OCI-LY7 (cell line): ENCODE measurements at regions of chr4 and their contacts with region 1.

Region 1: DNA sequence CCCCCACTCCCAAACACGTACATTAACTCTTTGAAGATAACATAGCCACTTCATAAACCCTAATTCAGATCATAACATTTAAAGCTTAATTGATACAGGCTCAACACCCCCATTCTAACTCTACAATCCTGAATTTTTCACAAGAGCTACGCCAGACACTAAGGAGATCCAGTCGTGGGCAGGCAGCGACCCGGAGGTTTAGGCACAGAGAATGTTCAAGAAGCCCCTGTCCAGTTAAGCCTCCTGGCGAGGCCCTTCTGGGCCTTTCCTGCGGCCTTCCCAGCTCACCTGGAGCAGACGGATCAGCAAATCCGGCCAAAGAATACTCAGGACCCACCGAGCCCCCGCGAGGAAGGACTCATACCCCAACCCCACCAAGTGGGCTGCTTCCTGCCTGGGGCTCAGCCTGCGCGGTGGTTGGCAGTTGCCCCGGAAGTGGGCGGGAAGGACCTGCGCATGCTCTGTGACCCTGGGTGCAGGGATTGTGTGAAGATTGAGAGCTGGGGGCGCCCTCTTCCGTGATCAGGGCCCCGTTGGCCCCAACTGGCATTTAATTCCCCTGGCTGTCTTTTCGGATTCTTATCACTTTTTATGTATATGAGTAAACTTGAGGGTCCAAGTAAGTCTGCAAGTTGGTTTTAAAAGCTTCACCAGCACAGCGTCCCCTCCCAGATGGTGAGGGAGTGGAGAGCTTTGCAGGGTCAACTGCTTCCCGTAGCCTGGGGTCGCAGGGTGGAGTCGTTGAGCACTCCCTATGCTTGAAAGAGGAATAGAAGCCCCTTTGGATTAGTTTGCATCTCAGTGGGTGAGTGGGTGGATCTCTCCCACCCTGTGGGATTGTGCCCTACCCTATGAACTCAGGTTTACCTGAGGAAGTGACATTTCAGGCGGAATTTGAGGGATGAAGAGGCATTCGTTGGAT is at the start of gene TRIM61:
- DNase-seq: peak; percentile 91
- H3K4me3 ChIP-seq: peak within 1 kb of the TSS; percentile 80
- H3K27ac ChIP-seq: peak within 1 kb of the TSS; percentile 4
- H3K4me1 ChIP-seq: peaks cover 11% of the 10 kb centered on the region
- CTCF ChIP-seq: peak; percentile 77
- total RNA-seq, gene TRIM61: 2.8 and 3.1 TPM in 2 replicates

Region 2: GRCh38 chr4:164779811-164780216 is 197.7 kb before region 1 on chr4:
- CTCF ChIA-PET with region 1: interaction called, 3 read pairs
- POLR2A ChIA-PET with region 1: no interaction called
- intact Hi-C with region 1: loop called (anchors 5 kb)
- DNase-seq: peak; percentile 28
- H3K4me3 ChIP-seq: no peak overlapping the region
- H3K27ac ChIP-seq: no peak overlapping the region
- H3K4me1 ChIP-seq: no peaks in the 10 kb centered on the region
- CTCF ChIP-seq: peak; percentile 87

Region 3: GRCh38 chr4:164937576-164938270 is 39.8 kb before region 1 on chr4:
- CTCF ChIA-PET with region 1: interaction called, 4 read pairs
- POLR2A ChIA-PET with region 1: interaction called, 4 read pairs
- intact Hi-C with region 1: loop called (anchors 5 kb)
- DNase-seq: peak; percentile 23
- H3K4me3 ChIP-seq: no peak overlapping the region
- H3K27ac ChIP-seq: no peak overlapping the region
- H3K4me1 ChIP-seq: no peaks in the 10 kb centered on the region
- CTCF ChIP-seq: peak; percentile 61

Region 4: DNA sequence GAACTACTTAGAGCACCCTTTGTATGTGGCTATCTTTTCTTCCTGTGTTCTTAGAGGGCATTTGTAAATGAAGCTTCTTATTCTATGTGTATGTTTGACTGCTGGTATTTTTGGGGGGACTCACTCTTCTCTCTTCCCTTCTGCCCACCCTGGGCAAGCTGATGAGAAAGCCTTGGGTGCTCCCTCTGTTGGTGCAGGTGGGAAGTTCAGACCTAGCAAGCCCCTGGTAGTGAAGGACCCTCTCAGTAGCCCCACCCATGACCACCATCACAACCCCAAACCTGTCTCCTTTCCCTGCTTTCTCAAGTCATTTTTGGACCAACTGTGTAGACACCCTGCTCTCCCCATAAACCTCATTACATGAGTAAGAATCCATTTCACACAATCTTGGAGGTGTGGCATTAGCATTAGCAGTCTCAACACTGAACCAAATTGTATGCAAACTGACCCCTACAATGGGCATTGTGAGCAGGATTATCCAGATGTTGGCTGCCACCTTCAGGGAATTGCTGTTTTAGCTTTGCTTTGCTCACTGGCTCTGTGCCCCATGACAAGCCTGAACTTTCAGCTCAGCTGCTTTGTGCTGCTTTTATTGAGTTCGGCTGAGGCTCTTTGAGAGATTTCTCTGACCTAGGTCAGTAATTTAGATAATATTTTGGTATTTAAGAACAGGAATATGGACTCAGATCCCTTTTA is 27.9 kb before region 1 on chr4:
- CTCF ChIA-PET with region 1: interaction called, 3 read pairs
- POLR2A ChIA-PET with region 1: interaction called, 12 read pairs
- intact Hi-C with region 1: loop called (anchors 2 kb)
- DNase-seq: peak; percentile 44
- H3K4me3 ChIP-seq: peak overlapping the region; percentile 12
- H3K27ac ChIP-seq: peak overlapping the region; percentile 41
- H3K4me1 ChIP-seq: peaks cover 38% of the 10 kb centered on the region
- CTCF ChIP-seq: peak; percentile 72

Region 5: GRCh38 chr4:164956766-164957643 is 20.5 kb before region 1 on chr4:
- CTCF ChIA-PET with region 1: no interaction called
- POLR2A ChIA-PET with region 1: interaction called, 39 read pairs
- intact Hi-C with region 1: no loop called
- DNase-seq: peak; percentile 93
- H3K4me3 ChIP-seq: peak overlapping the region; percentile 86
- H3K27ac ChIP-seq: peak overlapping the region; percentile 56
- H3K4me1 ChIP-seq: peaks cover 35% of the 10 kb centered on the region
- CTCF ChIP-seq: peak; percentile 24; the same call in 1 of the 2 replicates

Region 6: DNA sequence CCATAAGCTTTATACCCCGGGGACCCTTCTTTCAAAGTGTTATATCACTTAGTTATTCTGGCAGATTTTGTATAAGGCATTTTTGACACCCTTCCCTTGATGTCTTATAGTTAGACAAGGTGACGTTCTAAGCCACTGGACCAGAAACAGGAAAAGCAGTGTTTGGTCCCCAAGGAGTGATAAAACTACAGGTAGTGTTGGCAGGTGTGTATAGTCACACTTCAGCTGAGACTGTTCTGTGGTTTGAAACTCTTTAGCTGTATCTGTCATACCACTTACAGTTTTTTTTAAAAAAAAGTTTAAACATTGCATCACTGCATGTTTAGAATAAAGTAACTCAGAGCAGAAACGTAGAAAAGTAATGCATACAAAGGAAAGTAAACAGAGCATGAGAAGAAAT is 944.0 kb after region 1 on chr4:
- CTCF ChIA-PET with region 1: no interaction called
- POLR2A ChIA-PET with region 1: no interaction called
- intact Hi-C with region 1: loop called (anchors 10 kb)
- DNase-seq: peak; percentile 87
- H3K4me3 ChIP-seq: peak overlapping the region; percentile 39
- H3K27ac ChIP-seq: peak overlapping the region; percentile 71
- H3K4me1 ChIP-seq: peaks cover 42% of the 10 kb centered on the region
- CTCF ChIP-seq: no peak